Caco-2 (cell line): ENCODE measurements at regions of chr5 and their contacts with region 1.

Region 1: GRCh38 chr5:132315529-132316083 is 21.4 kb downstream of the SLC22A4 start:
- DNase-seq: no peak
- H3K4me3 ChIP-seq: no peak overlapping the region
- H3K4me3 Mint-ChIP-seq: no peak overlapping the region
- H3K27ac Mint-ChIP-seq: no peak overlapping the region
- H3K4me1 ChIP-seq: no peaks in the 10 kb centered on the region
- H3K4me1 Mint-ChIP-seq: peaks cover 6% of the 10 kb centered on the region
- H3K27me3 ChIP-seq: no peaks in the 10 kb centered on the region
- H3K27me3 Mint-ChIP-seq: no peaks in the 10 kb centered on the region
- CTCF ChIP-seq: peak in 1 of 2 experiments; percentile 42

Region 2: DNA sequence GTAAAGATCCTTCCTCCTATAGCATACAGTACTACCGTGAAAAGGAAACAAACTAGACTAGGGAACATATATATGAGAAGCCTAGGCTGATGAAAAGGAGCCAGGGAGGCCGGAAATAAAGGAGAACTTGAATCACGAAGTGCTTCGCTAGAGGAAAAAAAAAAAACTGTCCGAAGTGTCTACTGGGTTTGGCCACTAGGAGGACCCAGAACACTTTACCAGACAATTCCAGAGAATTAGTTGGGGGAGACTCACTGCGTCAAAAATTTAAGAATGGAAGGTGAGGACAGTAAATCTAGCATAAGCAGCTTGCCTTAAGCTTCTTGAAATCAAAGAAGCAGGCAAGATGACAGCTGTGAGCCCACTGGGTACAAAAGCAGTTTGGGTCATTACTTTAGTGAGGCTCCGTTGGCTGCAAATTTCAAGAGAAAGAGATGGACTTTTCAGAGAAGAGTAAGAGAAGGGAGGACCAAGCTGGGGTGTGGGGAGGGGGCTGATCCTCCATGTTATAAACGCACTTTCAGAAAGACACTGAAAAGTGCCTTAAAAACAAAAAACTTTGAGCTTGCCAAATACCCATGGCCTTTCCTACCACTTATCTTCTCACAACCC is 135.4 kb before region 1 on chr5:
- CTCF ChIA-PET with region 1: no interaction called
- POLR2A ChIA-PET with region 1: no interaction called
- intact Hi-C with region 1: loop called (anchors 1 kb)
- DNase-seq: peak in 1 of 2 experiments; percentile 49
- H3K4me3 ChIP-seq: no peak overlapping the region
- H3K4me3 Mint-ChIP-seq: no peak overlapping the region
- H3K27ac Mint-ChIP-seq: no peak overlapping the region
- H3K4me1 ChIP-seq: peaks cover 3% of the 10 kb centered on the region; the same call in 1 of the 2 replicates
- H3K4me1 Mint-ChIP-seq: peaks cover 13% of the 10 kb centered on the region
- H3K27me3 ChIP-seq: no peaks in the 10 kb centered on the region
- H3K27me3 Mint-ChIP-seq: no peaks in the 10 kb centered on the region
- CTCF ChIP-seq: peak; percentile 71 to 76

Region 3: GRCh38 chr5:132215329-132215728 is 100.3 kb before region 1 on chr5:
- CTCF ChIA-PET with region 1: no interaction called
- POLR2A ChIA-PET with region 1: no interaction called
- intact Hi-C with region 1: no loop called
- DNase-seq: no peak
- H3K4me3 ChIP-seq: no peak overlapping the region
- H3K4me3 Mint-ChIP-seq: no peak overlapping the region
- H3K27ac Mint-ChIP-seq: no peak overlapping the region
- H3K4me1 ChIP-seq: no peaks in the 10 kb centered on the region
- H3K4me1 Mint-ChIP-seq: no peaks in the 10 kb centered on the region
- H3K27me3 ChIP-seq: no peaks in the 10 kb centered on the region
- H3K27me3 Mint-ChIP-seq: no peaks in the 10 kb centered on the region
- CTCF ChIP-seq: no peak